ENCODE measurements at regions of chr12 and their contacts with region 1.

Region 1: DNA sequence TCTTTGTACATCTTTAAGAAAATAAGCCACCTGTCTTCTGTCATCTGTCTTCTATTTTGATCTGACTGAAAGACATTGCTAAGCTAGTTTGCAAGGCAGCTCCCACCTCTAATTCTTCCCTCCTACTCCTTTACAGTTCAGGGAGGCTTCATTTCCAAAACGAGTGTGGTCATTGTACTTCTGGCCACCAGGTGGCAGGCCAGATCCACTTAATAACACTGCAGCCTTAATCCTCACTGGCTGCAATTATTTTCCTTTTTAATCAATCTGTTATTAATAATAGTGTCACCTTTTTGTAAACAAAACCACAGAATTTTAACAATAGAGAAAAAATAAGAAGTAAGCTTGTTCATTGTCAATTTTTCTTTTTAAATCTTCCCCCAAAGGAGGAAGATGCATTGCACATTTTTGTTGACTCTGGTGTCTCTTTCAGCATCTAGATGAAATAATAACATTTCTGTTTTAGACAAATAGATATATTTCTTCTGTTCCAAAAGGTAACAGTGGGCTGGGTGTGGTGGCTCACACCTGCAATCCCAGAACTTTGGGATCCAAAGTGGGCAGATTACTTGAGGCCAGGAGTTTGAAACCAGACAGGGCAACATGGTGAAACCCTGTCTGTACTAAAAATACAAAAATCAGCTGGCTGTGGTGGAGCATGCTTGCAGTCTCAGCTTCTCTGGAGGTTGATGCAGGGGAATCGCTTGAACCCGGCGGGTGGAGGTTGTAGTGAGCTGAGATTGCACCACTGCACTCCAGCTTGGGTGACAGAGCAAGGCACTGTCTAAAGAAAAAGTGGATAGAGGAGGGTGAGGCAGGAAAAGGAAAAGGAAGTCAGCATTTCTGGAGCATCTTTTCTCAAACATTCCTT is 23.3 kb downstream of the GABARAPL1 start:
- DNase-seq: no peak
- H3K4me3 Mint-ChIP-seq: no peak overlapping the region
- H3K27ac Mint-ChIP-seq: no peak overlapping the region
- H3K4me1 Mint-ChIP-seq: peaks cover 15% of the 10 kb centered on the region
- H3K27me3 Mint-ChIP-seq: peaks cover 13% of the 10 kb centered on the region

Region 2: DNA sequence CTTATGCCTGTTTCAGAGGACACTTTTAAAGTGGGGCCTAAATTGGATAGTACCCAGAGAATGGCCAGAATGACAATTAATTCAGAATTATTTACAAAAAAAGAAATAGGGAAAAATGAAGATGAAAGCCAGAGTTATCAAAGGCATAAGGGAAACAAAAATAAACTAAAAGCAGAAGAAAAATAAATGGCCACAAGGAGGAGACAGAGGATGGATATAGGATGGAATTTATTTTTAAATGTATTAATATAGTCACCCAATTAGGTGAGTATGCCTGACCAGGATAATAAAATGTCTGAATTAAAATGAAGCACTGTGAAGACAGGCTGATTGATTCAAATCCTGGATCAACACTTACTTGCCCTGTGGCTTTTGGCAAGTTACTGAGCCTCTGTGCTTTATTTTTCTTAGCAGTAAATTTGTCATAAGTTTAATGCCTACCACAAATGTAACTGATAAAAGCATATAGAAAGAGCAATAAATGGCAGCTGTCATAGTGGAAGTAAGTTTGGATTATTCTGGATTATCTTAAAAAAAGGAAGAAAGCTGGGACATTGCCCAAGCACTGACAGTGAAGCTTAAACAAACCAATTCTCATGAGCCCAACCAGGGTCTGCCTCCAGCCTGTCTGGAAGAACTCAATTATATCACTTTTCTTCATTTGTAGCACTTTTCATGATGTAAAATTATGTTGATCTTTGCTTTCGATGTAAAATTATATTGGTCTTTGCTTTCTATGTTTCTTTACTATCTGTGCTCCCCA is 202.0 kb before region 1 on chr12:
- intact Hi-C with region 1: no loop called
- DNase-seq: no peak
- H3K4me3 Mint-ChIP-seq: no peak overlapping the region
- H3K27ac Mint-ChIP-seq: no peak overlapping the region
- H3K4me1 Mint-ChIP-seq: no peaks in the 10 kb centered on the region
- H3K27me3 Mint-ChIP-seq: peaks cover 8% of the 10 kb centered on the region

Region 3: DNA sequence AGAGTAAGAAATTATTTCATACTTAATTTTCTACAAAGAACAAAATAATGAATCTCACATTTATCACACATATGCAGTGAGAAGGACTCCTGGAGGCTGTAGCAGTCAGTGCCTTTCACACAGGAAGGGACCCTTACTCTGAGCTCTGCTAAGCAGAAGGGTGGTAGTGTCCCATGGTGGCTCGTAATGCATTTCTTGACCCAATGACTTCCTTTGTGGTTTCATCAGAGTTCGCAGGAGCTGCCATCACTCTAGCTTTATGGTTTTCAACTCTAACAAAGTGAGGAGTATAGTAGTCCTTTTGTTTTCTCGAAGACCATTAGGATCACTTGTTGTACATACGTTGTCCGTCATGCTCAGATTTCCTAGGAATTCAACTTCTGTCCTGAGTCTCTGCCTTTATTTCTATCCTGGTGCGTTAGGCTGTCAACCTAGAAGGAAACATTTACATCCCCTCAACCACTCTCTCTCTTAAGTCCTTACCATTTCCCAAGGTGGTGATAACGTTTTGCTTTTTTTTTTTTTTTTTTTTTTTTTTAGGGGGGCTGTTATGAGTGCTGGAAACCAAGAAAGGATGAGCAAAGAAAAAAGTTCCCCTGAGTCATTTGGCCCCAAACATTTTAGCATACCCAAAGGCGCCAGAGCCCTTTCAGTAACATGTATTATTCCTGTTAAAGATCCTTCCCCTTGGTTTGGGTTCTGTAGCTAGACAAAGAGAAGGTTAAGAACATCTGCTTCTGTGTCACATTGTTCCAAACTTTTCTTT is 13.9 kb after region 1 on chr12:
- intact Hi-C with region 1: no loop called
- DNase-seq: no peak
- H3K4me3 Mint-ChIP-seq: no peak overlapping the region
- H3K27ac Mint-ChIP-seq: no peak overlapping the region
- H3K4me1 Mint-ChIP-seq: peaks cover 9% of the 10 kb centered on the region
- H3K27me3 Mint-ChIP-seq: peaks cover 26% of the 10 kb centered on the region

Region 4: DNA sequence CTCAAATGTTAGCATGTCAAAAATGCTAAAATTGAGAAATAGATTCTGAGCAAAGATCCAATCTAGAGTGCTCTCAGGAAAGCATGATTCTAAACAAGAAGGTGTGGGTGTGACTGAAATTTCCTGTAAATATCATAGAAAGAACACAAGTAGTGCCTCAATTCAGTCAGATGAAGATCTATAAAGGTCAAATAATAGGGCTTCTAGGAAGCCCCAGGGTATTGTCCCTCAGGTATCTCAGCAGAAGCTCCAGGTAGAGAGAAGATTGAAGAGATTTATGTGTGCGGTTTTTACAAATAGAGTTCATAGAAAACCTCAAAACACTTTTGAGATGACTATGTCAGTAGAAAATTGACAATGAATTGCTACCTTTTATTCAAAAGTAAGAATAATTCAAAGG is 84.6 kb after region 1 on chr12:
- intact Hi-C with region 1: loop called (anchors 5 kb)
- DNase-seq: no peak
- H3K4me3 Mint-ChIP-seq: no peak overlapping the region
- H3K27ac Mint-ChIP-seq: peak overlapping the region; percentile 26
- H3K4me1 Mint-ChIP-seq: peaks cover 23% of the 10 kb centered on the region
- H3K27me3 Mint-ChIP-seq: peaks cover 13% of the 10 kb centered on the region

Region 5: DNA sequence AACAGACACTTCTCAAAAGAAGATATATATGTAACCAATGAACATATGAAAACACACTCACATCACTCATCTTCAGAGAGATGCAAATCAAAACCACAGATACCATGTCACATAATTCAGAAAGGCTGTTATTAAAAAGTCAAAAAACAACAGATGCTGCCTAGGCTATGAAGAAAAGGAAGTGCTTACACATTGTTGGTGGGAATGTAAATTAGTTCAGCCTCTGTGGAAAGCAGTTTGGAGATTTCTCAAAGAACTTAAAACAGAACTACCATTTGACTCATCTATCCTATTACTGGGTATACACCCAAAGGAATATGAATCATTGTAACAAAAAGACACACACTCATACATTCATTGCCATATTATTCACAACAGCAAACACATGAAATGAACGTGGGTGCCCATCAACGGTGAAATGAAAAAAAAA is 304.8 kb after region 1 on chr12:
- intact Hi-C with region 1: loop called (anchors 5 kb)
- DNase-seq: no peak
- H3K4me3 Mint-ChIP-seq: no peak overlapping the region
- H3K27ac Mint-ChIP-seq: peak overlapping the region; percentile 57
- H3K4me1 Mint-ChIP-seq: peaks cover 12% of the 10 kb centered on the region
- H3K27me3 Mint-ChIP-seq: peaks cover 5% of the 10 kb centered on the region

Region 6: DNA sequence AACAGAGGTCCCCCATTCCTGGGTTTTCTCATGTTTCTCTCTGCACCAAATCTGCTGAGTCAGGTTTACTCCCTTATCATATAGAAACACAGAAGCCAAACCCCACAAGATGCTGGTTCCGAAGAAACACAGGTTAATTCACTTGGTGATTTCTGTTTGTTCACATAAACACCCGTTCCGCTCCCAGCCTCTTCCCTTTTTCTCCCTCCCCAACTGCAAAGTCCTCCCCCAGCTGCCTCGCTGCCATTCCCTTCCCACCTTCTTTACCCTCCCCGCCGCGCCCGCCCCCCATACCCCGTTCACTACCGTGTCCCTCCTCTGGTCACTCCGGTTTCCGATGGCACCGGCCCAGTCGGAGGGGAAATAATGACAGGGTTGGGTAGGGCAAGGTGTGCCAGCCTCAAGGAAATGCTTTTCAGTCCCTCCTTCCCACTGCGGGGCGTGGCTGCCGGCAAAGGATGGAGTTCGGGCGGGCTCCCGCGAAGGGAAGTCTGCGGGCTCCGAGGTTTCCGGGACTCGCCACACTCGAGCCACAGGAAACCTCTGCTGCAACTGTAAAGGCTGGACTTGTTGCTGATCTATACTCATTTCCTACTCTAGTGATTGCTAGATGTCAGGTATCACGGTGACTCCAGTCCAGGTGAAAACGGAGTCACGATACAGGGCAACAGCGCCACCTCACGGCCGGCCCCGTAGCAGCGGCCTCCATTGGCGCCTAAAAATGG is 437.8 kb after region 1 on chr12 and contains the start of gene STYK1:
- intact Hi-C with region 1: loop called (anchors 1 kb)
- DNase-seq: peak; percentile 73
- H3K4me3 Mint-ChIP-seq: peak within 1 kb of the TSS; percentile 86
- H3K27ac Mint-ChIP-seq: peak within 1 kb of the TSS; percentile 72
- H3K4me1 Mint-ChIP-seq: peaks cover 74% of the 10 kb centered on the region
- H3K27me3 Mint-ChIP-seq: peaks cover 35% of the 10 kb centered on the region
- total RNA-seq, gene STYK1: 0.34 TPM in 1 of 2 replicates, not detected in the other

Region 7: DNA sequence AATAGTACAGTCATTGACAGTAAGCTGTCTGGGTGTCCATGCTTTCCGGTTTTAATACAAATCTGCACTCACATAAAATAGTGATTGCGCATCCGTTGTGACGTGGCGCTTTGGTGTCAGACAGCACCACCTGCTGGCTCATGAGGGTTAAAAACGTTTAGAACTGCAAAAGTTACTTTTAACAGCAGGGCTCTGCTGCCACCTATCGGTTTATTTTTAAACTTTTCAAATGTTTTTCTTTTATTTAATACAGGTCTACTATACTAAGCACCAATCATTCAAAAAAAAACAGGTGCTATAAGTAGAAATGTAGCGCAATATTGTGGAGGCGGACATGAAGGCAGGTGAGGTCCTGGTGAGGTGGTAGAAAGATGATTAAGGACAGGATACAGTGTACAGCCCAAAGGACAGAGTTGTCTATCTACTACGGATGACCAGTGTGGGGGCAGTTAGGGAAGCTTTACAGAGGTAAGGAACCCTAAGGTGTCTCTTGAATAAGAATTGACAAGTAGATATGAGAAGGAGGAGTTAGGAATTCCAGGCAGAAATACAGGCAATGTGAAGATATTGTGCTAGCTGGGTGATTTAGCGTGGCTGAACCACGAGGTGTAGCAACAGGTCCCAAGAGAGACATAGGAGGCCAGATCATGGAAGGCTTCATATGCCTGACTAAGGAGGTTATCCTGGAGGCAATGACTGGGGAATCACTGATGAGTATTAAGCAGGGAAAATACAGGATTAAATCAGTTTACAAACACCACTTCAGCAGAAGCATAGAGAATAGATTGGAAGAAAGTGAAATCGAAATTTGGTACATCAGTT is 1250.8 kb after region 1 on chr12:
- intact Hi-C with region 1: loop called (anchors 5 kb)
- DNase-seq: peak; percentile 68
- H3K4me3 Mint-ChIP-seq: no peak overlapping the region
- H3K27ac Mint-ChIP-seq: no peak overlapping the region
- H3K4me1 Mint-ChIP-seq: peaks cover 11% of the 10 kb centered on the region
- H3K27me3 Mint-ChIP-seq: peaks cover 10% of the 10 kb centered on the region